SK-N-SH (cell line): ENCODE measurements at regions of chr4 and their contacts with region 1.

Region 1: GRCh38 chr4:81913427-81913879 is 441.7 kb upstream of the RASGEF1B start:
- DNase-seq: peak; percentile 46
- H3K4me3 ChIP-seq: no peak overlapping the region
- H3K27ac ChIP-seq: no peak overlapping the region
- H3K4me1 ChIP-seq: no peaks in the 10 kb centered on the region
- H3K27me3 ChIP-seq: no peaks in the 10 kb centered on the region
- CTCF ChIP-seq: peak; percentile 71
- EP300 ChIP-seq: no peak
- RAD21 ChIP-seq: peak; percentile 30; the same call in 1 of the 2 replicates

Region 2: DNA sequence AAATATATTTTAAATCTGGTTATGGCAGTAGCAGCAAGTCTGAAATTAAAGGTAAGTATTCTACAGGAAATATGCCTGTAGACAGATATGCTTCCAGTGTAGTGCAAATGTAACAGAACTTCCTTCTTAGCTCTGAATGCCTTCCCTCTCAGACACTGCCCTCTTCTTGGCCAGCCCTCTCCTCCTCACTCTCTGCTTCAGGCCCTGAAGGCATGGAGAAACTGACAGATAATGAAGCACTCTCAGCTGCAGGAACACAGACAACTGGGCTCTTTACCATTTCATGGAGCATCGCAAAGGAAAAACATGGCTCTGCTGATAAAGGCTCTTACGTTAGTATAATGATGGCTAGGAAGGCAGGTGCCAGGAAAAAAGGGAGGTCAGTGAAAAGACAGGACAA is 10.2 kb before region 1 on chr4:
- CTCF ChIA-PET with region 1: interaction called, 16 read pairs
- POLR2A ChIA-PET with region 1: no interaction called
- DNase-seq: no peak
- H3K4me3 ChIP-seq: no peak overlapping the region
- H3K27ac ChIP-seq: no peak overlapping the region
- H3K4me1 ChIP-seq: no peaks in the 10 kb centered on the region
- H3K27me3 ChIP-seq: no peaks in the 10 kb centered on the region; the same call in 1 of the 2 replicates
- CTCF ChIP-seq: no peak
- EP300 ChIP-seq: no peak
- RAD21 ChIP-seq: no peak